ENCODE measurements at regions of chr3 and their contacts with region 1.

Region 1: DNA sequence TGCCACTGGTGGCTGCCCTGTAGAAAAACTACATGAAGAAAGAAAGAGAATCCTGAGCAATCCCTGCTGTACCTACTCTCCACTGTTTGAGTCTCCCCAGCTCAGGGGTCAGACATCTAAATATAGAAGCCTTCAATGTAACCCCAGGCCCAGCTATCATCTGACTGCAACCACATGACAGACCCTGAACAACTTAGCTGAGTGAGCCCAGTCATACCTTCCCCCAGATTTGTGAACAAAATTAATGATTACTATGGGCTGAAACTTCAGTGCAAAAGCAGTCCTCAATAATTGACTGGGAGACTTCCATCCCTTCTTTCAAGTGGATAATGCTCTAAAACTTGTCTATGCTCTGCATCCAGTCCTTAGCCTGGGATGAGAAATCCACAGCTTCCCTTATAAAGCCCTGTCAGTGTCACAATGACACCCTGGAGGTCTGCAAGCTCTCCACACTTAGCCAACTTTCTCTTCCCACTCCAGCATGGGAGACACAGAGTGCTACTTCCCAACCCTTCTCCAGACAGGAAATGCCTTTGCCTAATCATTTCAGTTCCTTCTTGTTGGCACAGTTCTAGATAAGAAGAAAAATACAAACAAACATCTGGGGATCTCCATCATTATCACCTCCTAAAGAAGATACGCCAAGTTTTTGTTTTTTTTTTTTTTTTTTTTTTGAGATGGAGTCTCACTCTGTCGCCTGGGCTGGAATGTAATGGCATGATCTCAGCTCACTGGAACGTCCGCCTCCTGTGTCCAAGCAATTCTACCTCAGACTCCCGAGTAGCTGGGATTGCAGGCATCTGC is 198.5 kb upstream of the GADL1 start:
- DNase-seq: no peak
- H3K4me3 ChIP-seq: no peak overlapping the region
- H3K27ac ChIP-seq: no peak overlapping the region
- H3K4me1 ChIP-seq: no peaks in the 10 kb centered on the region
- H3K27me3 ChIP-seq: no peaks in the 10 kb centered on the region
- CTCF ChIP-seq: no peak
- POLR2A ChIP-seq: no peak

Region 2: GRCh38 chr3:30871720-30872119 is 221.2 kb before region 1 on chr3:
- intact Hi-C with region 1: no loop called
- DNase-seq: no peak
- H3K4me3 ChIP-seq: no peak overlapping the region
- H3K27ac ChIP-seq: no peak overlapping the region
- H3K4me1 ChIP-seq: no peaks in the 10 kb centered on the region
- H3K27me3 ChIP-seq: no peaks in the 10 kb centered on the region
- CTCF ChIP-seq: no peak
- POLR2A ChIP-seq: no peak

Region 3: DNA sequence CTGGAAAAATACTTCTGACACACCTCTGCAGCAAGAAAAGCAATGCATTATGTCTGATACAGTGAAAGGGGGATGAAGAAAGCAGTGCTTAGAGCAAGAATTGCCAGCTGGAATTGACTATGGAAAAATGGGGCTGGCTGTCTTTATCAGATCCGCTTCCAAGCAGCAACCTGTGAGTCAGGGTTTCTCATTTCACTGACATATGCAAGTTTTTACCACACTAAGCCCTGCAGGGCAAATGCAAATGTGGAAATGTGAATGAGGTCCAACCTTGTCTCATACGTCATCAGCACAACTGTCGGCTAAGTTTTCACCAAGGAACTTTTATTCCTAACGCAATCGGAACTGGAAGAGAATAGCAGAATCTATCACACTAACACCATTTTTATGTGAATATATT is 25.9 kb before region 1 on chr3:
- intact Hi-C with region 1: loop called (anchors 2 kb)
- DNase-seq: no peak
- H3K4me3 ChIP-seq: no peak overlapping the region
- H3K27ac ChIP-seq: no peak overlapping the region
- H3K4me1 ChIP-seq: no peaks in the 10 kb centered on the region
- H3K27me3 ChIP-seq: no peaks in the 10 kb centered on the region
- CTCF ChIP-seq: no peak
- POLR2A ChIP-seq: no peak

Measured in vagina (tissue), 2 donors.